PC-3 (cell line): ENCODE measurements at regions of chr1 and their contacts with region 1.

Region 1: GRCh38 chr1:153572569-153573015 is 6.9 kb upstream of the S100A2 start:
- DNase-seq: peak; percentile 94
- ATAC-seq: peak; percentile 67
- H3K4me3 ChIP-seq: 0 out of 2 replicates have a peak overlapping the region, but pooled peaks have one; percentile 0
- H3K27ac ChIP-seq: peak overlapping the region; percentile 76
- H3K4me1 ChIP-seq: peaks cover 39% of the 10 kb centered on the region
- H3K27me3 ChIP-seq: no peaks in the 10 kb centered on the region
- CTCF ChIP-seq: peak; percentile 98

Region 2: GRCh38 chr1:153470707-153471106 is 101.9 kb before region 1 on chr1:
- CTCF ChIA-PET with region 1: no interaction called
- POLR2A ChIA-PET with region 1: no interaction called
- intact Hi-C with region 1: no loop called
- DNase-seq: no peak
- ATAC-seq: no peak
- H3K4me3 ChIP-seq: no peak overlapping the region
- H3K27ac ChIP-seq: no peak overlapping the region
- H3K4me1 ChIP-seq: no peaks in the 10 kb centered on the region
- H3K27me3 ChIP-seq: no peaks in the 10 kb centered on the region
- CTCF ChIP-seq: no peak

Region 3: GRCh38 chr1:153510984-153511410 is 61.6 kb before region 1 on chr1:
- CTCF ChIA-PET with region 1: interaction called, 24 read pairs
- POLR2A ChIA-PET with region 1: interaction called, 9 read pairs
- intact Hi-C with region 1: loop called (anchors 1 kb)
- DNase-seq: peak; percentile 92
- ATAC-seq: peak; percentile 39
- H3K4me3 ChIP-seq: no peak overlapping the region
- H3K27ac ChIP-seq: peak overlapping the region; percentile 45
- H3K4me1 ChIP-seq: peaks cover 76% of the 10 kb centered on the region
- H3K27me3 ChIP-seq: no peaks in the 10 kb centered on the region
- CTCF ChIP-seq: peak; percentile 99

Region 4: GRCh38 chr1:153608742-153609584 is 36.4 kb after region 1 on chr1:
- CTCF ChIA-PET with region 1: interaction called, 14 read pairs
- POLR2A ChIA-PET with region 1: interaction called, 12 read pairs
- intact Hi-C with region 1: loop called (anchors 2 kb)
- DNase-seq: peak; percentile 99
- ATAC-seq: peak; percentile 58
- H3K4me3 ChIP-seq: peak overlapping the region; percentile 68
- H3K27ac ChIP-seq: peak overlapping the region; percentile 100
- H3K4me1 ChIP-seq: peaks cover 50% of the 10 kb centered on the region
- H3K27me3 ChIP-seq: no peaks in the 10 kb centered on the region
- CTCF ChIP-seq: no peak

Region 5: GRCh38 chr1:153626922-153627796 is 54.6 kb after region 1 on chr1 and contains the start of gene S100A13:
- CTCF ChIA-PET with region 1: interaction called, 18 read pairs
- POLR2A ChIA-PET with region 1: interaction called, 8 read pairs
- intact Hi-C with region 1: no loop called
- DNase-seq: peak; percentile 97
- ATAC-seq: peak; percentile 88
- H3K4me3 ChIP-seq: peak within 1 kb of the TSS; percentile 84
- H3K27ac ChIP-seq: peak within 1 kb of the TSS; percentile 79
- H3K4me1 ChIP-seq: peaks cover 33% of the 10 kb centered on the region
- H3K27me3 ChIP-seq: no peaks in the 10 kb centered on the region
- CTCF ChIP-seq: peak; percentile 95
- total RNA-seq, gene S100A13: 307 and 350 TPM in 2 replicates

Region 6: GRCh38 chr1:153670859-153671627 is 98.5 kb after region 1 on chr1 and contains the start of gene ILF2:
- CTCF ChIA-PET with region 1: interaction called, 5 read pairs
- POLR2A ChIA-PET with region 1: interaction called, 4 read pairs
- intact Hi-C with region 1: loop called (anchors 1 kb)
- DNase-seq: peak; percentile 100
- ATAC-seq: peak; percentile 87
- H3K4me3 ChIP-seq: peak within 1 kb of the TSS; percentile 89
- H3K27ac ChIP-seq: peak within 1 kb of the TSS; percentile 52
- H3K4me1 ChIP-seq: peaks cover 17% of the 10 kb centered on the region
- H3K27me3 ChIP-seq: no peaks in the 10 kb centered on the region
- CTCF ChIP-seq: peak; percentile 54
- total RNA-seq, gene ILF2: 398 and 439 TPM in 2 replicates